H1 (cell line): ENCODE measurements at regions of chr20 and their contacts with region 1.

Region 1: DNA sequence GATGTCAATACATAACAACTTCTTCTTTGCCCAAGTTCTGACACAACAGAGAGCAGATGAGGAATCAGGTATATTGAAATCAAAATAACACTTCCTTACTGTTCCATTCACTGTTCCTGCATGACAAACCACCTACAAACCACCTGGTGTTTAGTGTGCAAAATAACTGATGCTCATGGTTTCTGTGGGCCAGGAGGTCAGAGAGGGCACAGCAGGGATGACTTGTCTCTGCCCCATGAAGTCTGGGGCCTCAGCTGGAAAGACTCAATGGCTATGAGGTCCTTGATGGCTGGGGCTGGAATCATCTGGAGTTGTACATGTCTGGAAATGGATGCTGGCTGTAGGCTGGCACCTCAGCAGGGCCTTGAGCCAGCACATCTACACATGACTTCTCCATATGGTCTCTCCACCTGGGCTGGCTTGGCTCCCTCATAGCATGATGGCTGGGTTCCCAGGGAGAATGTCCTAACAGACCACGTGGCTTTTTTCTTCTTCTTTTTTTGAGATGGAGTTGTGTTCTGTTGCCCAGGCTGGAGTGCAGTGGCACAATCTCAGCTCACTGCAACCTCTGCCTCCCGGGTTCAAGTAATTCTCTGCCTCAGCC is 7.4 kb upstream of the COX4I2 start:
- DNase-seq: no peak
- H3K4me3 ChIP-seq: no peak overlapping the region
- H3K27ac ChIP-seq: no peak overlapping the region
- H3K4me1 ChIP-seq: no peaks in the 10 kb centered on the region; a peak in 2 of 7 replicates
- H3K27me3 ChIP-seq: no peaks in the 10 kb centered on the region
- CTCF ChIP-seq: no peak
- EP300 ChIP-seq: no peak
- POLR2A ChIP-seq: no peak
- RAD21 ChIP-seq: no peak

Region 2: DNA sequence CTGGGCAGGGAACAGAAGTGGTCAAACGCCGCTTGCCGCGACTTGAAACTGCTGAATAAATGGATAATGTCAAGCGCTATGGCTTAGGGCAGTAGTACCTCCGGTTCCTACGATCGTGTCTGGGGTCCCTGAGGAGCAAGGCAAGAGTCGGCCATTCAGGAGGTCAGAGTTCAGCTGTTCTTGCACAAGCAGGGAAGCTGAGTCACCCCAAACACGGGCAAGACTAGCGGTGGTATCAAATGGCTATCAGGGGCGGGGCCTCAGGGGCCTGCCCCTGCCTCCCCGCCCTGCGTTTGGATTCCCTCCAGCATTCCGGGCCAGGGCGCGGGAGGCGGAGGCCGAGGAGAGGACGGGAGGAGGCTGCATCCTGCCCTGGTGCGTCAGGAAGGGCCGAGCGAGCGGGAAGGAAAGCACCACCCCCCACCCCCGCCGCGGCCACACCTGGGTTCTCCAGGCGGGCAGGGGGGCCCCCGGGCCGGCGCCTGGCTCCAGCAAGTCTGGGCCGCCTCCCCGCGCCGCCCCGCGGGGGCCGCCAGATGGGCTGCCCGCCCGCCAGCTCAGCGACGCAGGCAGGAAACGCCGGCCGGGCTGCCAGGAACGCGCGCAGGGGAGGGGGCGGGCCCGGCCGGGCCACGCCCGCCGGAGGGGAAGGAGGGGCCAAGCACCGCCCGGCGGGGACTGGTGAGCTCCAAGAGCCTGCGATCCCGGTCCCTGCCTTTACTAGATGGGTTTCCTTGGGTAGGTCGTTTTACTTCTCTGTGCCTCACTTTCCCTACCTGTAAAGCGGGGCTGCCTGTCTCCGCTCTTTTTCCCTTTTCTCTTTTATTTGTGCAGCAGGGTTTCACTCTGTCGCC is 57.4 kb before region 1 on chr20:
- CTCF ChIA-PET with region 1: interaction called, 1,559 read pairs
- POLR2A ChIA-PET with region 1: interaction called, 5 read pairs
- DNase-seq: peak; percentile 88 to 92
- H3K4me3 ChIP-seq: peak overlapping the region; percentile 34 to 54 (median 45)
- H3K27ac ChIP-seq: peak overlapping the region; percentile 86
- H3K4me1 ChIP-seq: peaks cover 13 to 36% (median 27%) of the 10 kb centered on the region in 4 experiments
- H3K27me3 ChIP-seq: no peaks in the 10 kb centered on the region
- CTCF ChIP-seq: 0 out of 4 replicates have a peak, but pooled peaks of 1 of the 3 experiments have one; percentile 19
- EP300 ChIP-seq: peak; percentile 3 to 94
- POLR2A ChIP-seq: peak; percentile 98
- RAD21 ChIP-seq: peak in 1 of 2 experiments; percentile 28; a peak in 2 of 4 replicates

Region 3: GRCh38 chr20:31644701-31645100 is 14.4 kb after region 1 on chr20:
- CTCF ChIA-PET with region 1: interaction called, 51 read pairs
- POLR2A ChIA-PET with region 1: interaction called, 3 read pairs
- DNase-seq: no peak
- H3K4me3 ChIP-seq: no peak overlapping the region
- H3K27ac ChIP-seq: no peak overlapping the region
- H3K4me1 ChIP-seq: peaks cover 0 to 2% (median 2%) of the 10 kb centered on the region in 4 experiments; a peak in 2 of 7 replicates
- H3K27me3 ChIP-seq: no peaks in the 10 kb centered on the region
- CTCF ChIP-seq: no peak
- EP300 ChIP-seq: no peak
- POLR2A ChIP-seq: no peak
- RAD21 ChIP-seq: no peak

Region 4: GRCh38 chr20:31684153-31685015 is 54.1 kb after region 1 on chr20:
- CTCF ChIA-PET with region 1: interaction called, 16 read pairs
- POLR2A ChIA-PET with region 1: no interaction called
- DNase-seq: no peak
- H3K4me3 ChIP-seq: no peak overlapping the region
- H3K27ac ChIP-seq: no peak overlapping the region
- H3K4me1 ChIP-seq: peaks cover 0 to 3% (median 1%) of the 10 kb centered on the region in 4 experiments; a peak in 1 of 7 replicates
- H3K27me3 ChIP-seq: no peaks in the 10 kb centered on the region
- CTCF ChIP-seq: no peak
- EP300 ChIP-seq: no peak
- POLR2A ChIP-seq: no peak
- RAD21 ChIP-seq: no peak